ENCODE measurements at regions of chr1 and their contacts with region 1.

Region 1: DNA sequence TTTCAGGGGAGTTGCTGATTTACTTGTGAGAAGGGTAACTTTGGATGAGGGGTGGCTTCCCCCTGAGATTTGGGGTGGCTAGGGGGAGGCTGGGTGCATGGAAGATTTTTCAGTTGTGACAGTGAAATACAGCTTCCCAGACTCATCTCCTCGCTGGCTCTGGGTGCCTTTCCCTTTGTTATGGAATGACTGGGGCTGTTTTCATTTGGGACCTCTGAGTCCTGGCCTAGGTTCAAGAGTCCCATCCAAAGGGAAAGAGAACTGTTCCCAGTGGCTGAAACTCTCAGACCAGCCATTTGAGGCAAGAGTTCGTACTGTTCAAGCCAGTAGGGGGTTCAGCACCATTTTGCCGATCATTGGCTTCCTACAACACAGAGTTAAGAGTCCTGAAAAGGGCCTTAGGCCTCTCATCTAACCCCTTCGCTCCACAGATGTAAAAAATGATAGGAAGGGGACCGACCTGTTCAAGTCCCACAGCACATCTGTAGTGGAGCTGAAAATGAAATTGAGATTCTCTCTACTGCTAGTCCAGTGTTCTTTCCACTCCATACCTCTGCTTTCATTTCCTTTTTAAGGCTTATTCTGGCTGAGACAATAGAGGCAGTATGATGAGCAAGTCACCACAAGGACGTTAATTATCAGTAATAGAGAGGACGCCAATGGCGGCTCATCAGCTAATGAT is 958 bp downstream of the DDR2 start:
- DNase-seq: peak; percentile 75
- H3K4me3 ChIP-seq: peak overlapping the region; percentile 51 to 94 (median 81)
- H3K27ac ChIP-seq: peak overlapping the region; percentile 69
- H3K4me1 ChIP-seq: peaks cover 58% of the 10 kb centered on the region
- H3K27me3 ChIP-seq: no peaks in the 10 kb centered on the region
- CTCF ChIP-seq: peak in 1 of 2 donors; percentile 36
- POLR2A ChIP-seq: peak; percentile 25

Region 2: GRCh38 chr1:162541619-162542141 is 91.5 kb before region 1 on chr1:
- CTCF ChIA-PET with region 1: no interaction called
- POLR2A ChIA-PET with region 1: no interaction called
- dilution Hi-C with region 1: no loop called
- intact Hi-C with region 1: no loop called
- DNase-seq: peak; percentile 92
- H3K4me3 ChIP-seq: no peak overlapping the region
- H3K27ac ChIP-seq: peak overlapping the region; percentile 83
- H3K4me1 ChIP-seq: peaks cover 50% of the 10 kb centered on the region
- H3K27me3 ChIP-seq: no peaks in the 10 kb centered on the region
- CTCF ChIP-seq: no peak
- POLR2A ChIP-seq: no peak

Region 3: DNA sequence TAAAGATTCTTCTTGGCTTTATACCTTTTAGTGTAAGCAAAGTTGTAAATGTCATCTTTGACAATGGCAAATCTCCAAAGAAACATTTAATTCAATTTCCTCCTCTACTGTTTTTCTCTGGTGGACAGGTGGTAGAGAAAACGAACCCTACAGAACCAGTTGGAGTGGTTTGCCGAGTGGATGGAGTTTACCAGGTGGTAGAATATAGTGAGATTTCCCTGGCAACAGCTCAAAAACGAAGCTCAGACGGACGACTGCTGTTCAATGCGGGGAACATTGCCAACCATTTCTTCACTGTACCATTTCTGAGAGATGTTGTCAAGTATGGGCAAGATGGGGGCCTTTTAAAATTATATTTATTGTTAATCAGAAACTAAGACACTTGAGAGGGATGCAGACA is 45.9 kb before region 1 on chr1:
- CTCF ChIA-PET with region 1: no interaction called
- POLR2A ChIA-PET with region 1: no interaction called
- dilution Hi-C with region 1: no loop called
- intact Hi-C with region 1: no loop called
- DNase-seq: no peak
- H3K4me3 ChIP-seq: no peak overlapping the region
- H3K27ac ChIP-seq: no peak overlapping the region
- H3K4me1 ChIP-seq: no peaks in the 10 kb centered on the region
- H3K27me3 ChIP-seq: no peaks in the 10 kb centered on the region
- CTCF ChIP-seq: no peak
- POLR2A ChIP-seq: no peak

Region 4: GRCh38 chr1:162670928-162671663 is 37.9 kb after region 1 on chr1:
- CTCF ChIA-PET with region 1: interaction called, 16 read pairs
- POLR2A ChIA-PET with region 1: no interaction called
- dilution Hi-C with region 1: no loop called
- intact Hi-C with region 1: loop called (anchors 1 kb)
- DNase-seq: peak; percentile 72
- H3K4me3 ChIP-seq: no peak overlapping the region
- H3K27ac ChIP-seq: peak overlapping the region; percentile 21
- H3K4me1 ChIP-seq: peaks cover 45% of the 10 kb centered on the region
- H3K27me3 ChIP-seq: no peaks in the 10 kb centered on the region
- CTCF ChIP-seq: no peak
- POLR2A ChIP-seq: no peak

Region 5: GRCh38 chr1:162678439-162678838 is 45.2 kb after region 1 on chr1:
- CTCF ChIA-PET with region 1: interaction called, 16 read pairs
- POLR2A ChIA-PET with region 1: no interaction called
- dilution Hi-C with region 1: no loop called
- intact Hi-C with region 1: no loop called
- DNase-seq: peak; percentile 53
- H3K4me3 ChIP-seq: no peak overlapping the region
- H3K27ac ChIP-seq: no peak overlapping the region
- H3K4me1 ChIP-seq: peaks cover 53% of the 10 kb centered on the region
- H3K27me3 ChIP-seq: no peaks in the 10 kb centered on the region
- CTCF ChIP-seq: no peak
- POLR2A ChIP-seq: no peak

Region 6: DNA sequence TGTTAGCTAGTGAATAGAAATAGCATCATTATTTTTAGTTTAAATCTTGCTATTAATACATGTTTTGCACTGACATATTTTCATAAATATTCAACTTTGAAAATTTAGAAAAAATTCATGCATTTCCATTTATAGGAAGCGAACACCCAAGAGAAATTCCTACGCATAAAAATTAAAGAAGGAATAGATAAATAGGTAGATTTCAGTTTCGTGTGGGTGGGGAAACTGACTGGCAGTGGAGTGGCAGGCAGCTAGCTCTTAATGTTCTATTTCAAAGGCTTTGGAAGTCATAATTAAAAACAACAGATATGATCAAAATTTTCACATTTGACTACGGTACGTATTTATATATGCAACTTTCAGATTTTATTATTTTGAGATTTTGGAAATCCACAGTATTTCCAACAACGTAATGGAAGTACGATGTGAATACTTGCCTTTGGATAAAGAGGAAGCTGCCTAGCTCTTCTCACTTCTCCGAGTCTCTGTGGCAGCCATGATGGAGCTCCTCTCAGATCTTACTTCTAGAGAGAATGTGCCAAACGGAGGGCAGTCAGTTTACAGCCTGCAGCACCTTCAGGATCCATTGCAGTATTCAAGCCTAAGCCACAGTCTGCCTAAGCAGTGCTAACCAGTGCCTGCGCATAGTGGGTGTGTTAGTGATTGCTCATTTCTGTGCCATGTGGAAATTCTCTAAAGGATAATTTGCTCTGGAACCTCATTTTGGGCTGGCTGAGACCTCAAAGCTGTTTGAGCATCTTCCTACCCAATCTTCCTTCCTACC is 373.0 kb after region 1 on chr1:
- CTCF ChIA-PET with region 1: no interaction called
- POLR2A ChIA-PET with region 1: no interaction called
- dilution Hi-C with region 1: no loop called
- intact Hi-C with region 1: no loop called
- DNase-seq: no peak
- H3K4me3 ChIP-seq: no peak overlapping the region
- H3K27ac ChIP-seq: no peak overlapping the region
- H3K4me1 ChIP-seq: no peaks in the 10 kb centered on the region
- H3K27me3 ChIP-seq: no peaks in the 10 kb centered on the region
- CTCF ChIP-seq: no peak
- POLR2A ChIP-seq: no peak

Measured in endothelial cell of umbilical vein (primary cell).